ACHN (cell line): ENCODE measurements at regions of chr19 and their contacts with region 1.

Region 1: GRCh38 chr19:55516878-55517620 is 19.9 kb downstream of the SBK2 start:
- DNase-seq: peak; percentile 88

Region 2: DNA sequence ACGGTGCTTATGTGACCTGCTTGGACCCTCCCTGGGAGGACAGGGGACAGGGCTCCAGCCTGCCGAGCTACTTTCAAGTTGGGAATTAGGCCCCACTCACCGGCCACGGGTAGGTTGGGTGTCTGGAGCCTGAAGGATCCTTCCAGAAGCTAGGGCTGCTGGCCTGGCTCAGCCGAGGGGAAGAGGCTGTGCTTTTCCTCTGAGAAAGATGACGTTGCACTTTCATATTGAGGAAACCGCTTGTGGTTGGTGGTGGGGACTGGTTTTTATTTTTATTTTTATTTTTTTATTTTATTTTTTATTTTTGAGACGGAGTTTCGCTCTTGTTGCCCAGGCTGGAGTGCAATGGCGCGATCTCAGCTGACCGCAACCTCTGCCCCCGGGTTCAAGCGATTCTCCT is 191.9 kb before region 1 on chr19 and contains the start of gene TMEM150B:
- in situ Hi-C with region 1: no loop called
- DNase-seq: no peak

Region 3: DNA sequence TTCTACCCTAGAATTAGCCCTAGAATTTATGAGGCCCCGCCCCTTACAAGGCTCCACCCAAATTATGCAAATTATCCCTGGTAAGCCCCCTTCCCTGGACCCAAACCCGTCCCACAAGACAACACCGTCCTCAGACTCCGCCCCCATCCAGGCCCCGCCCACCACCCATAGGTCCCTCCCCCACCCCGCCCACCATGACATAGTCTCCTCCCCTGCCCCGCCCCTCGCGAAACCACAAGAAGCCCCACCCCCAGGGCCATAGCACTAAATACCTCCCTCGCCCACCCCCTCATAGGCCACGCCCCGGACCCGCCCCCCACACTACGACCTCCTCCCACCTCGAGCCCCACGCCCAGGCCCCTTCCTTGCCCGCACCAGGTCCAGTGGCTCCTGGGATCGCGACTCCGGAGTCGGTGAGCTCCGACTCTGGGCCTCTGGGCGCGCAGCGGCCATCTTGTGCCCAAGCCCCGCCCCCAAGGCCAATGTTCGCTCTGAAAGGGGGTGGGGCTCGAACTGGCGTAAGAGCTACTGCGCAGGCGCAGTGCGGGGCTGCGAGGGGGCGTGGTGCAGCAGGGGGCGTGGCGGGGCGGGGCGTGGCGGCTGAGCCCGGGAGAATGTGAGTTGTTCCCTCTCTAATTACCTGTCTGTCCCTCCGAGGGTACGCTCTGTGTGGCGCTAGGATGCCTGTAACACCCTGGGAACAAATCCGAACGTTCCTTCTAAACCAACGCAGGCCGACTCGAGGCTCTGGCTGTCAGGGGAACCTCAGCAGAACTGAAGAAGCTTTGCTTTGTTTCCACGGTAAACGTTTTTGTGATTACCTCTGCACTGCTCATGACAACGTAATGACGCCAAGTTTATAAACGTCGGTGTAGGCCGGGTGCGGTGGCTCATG is 107.3 kb after region 1 on chr19 and contains the start of gene ZNF784:
- in situ Hi-C with region 1: loop called (anchors 10 kb)
- DNase-seq: peak; percentile 86